ENCODE measurements at regions of chr3 and their contacts with region 1.

Region 1: GRCh38 chr3:183895296-183895695 is 10.6 kb upstream of the PARL start:
- DNase-seq: no peak
- ATAC-seq: peak; percentile 89
- H3K4me3 ChIP-seq: no peak overlapping the region
- H3K27ac ChIP-seq: no peak overlapping the region
- H3K4me1 ChIP-seq: no peaks in the 10 kb centered on the region
- H3K27me3 ChIP-seq: no peaks in the 10 kb centered on the region
- CTCF ChIP-seq: peak; percentile 84

Region 2: DNA sequence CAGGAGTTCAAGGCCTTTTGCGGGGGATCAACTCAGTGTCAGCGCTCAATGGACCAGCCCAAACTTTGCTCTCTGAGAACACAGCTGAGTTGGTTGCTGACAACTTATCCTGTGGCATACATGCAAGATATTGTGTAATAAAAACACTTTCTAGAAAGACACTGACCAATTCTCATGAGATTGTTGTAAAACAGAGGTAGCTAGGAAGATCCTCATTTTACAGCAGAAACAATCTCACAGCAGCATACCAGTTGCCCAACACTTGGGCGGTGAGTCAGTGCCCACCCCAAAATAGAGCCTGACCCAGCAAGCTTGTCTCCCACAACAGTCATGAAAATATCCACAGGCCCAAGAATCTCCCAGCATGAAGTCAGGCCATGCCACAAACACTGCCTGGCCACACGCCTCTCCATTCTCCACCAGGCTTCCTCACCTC is 358.0 kb before region 1 on chr3:
- intact Hi-C with region 1: no loop called
- DNase-seq: peak; percentile 71
- ATAC-seq: peak; percentile 71
- H3K4me3 ChIP-seq: no peak overlapping the region
- H3K27ac ChIP-seq: no peak overlapping the region
- H3K4me1 ChIP-seq: peaks cover 24% of the 10 kb centered on the region
- H3K27me3 ChIP-seq: no peaks in the 10 kb centered on the region
- CTCF ChIP-seq: no peak

Region 3: DNA sequence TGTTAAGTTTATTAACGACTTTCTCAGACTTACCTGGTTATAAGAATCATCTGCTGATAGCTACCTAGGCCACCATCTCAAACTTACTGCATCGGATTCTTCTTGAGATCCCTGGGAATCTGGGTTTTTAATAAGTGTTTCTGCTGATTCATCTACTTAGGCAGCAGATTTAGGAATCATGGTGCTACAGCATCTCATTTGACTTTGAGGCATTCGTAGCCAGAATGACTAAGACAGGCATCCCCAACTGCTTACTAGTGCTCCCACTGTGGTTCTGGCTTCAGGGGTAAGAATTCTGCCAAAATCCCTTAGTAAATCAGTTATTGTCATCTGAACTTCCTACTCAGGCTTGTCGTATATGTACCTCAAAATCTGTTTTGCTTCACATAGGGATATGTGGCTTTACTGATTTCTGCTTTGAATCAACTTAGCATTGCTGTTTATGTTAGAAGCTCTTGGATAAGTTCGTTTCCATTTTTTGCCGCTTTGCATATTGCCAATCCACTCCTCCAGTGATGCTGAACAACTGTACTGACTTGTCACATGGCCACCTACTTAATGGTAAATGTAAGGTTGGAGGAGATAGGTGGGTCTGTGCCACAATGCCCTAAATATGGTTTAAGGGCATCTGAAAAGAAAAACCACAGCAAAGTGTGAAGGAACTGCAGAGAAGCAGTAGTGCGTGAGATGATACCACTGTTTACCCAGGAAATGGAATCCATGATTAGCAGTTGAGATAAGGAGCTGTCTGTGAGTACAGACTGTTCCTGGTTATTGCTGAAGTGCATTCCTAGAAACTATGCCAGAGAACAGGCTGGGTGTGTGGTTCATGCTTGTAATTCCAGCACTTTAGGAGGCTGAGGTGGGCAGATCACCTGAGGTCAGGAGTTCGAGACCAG is 130.2 kb before region 1 on chr3:
- intact Hi-C with region 1: no loop called
- DNase-seq: no peak
- ATAC-seq: peak; percentile 84
- H3K4me3 ChIP-seq: no peak overlapping the region
- H3K27ac ChIP-seq: peak overlapping the region; percentile 61
- H3K4me1 ChIP-seq: peaks cover 28% of the 10 kb centered on the region
- H3K27me3 ChIP-seq: no peaks in the 10 kb centered on the region
- CTCF ChIP-seq: no peak

Region 4: GRCh38 chr3:184017672-184018423 is 122.6 kb after region 1 on chr3 and contains the start of gene ABCC5:
- intact Hi-C with region 1: loop called (anchors 10 kb)
- DNase-seq: peak; percentile 95
- ATAC-seq: peak; percentile 99
- H3K4me3 ChIP-seq: peak within 1 kb of the TSS; percentile 99
- H3K27ac ChIP-seq: peak within 1 kb of the TSS; percentile 80
- H3K4me1 ChIP-seq: peaks cover 14% of the 10 kb centered on the region
- H3K27me3 ChIP-seq: no peaks in the 10 kb centered on the region
- CTCF ChIP-seq: peak; percentile 35
- total RNA-seq, gene ABCC5: 33.5 TPM